Endothelial cell of umbilical vein (primary cell): ENCODE measurements at regions of chr12 and their contacts with region 1.

Region 1: DNA sequence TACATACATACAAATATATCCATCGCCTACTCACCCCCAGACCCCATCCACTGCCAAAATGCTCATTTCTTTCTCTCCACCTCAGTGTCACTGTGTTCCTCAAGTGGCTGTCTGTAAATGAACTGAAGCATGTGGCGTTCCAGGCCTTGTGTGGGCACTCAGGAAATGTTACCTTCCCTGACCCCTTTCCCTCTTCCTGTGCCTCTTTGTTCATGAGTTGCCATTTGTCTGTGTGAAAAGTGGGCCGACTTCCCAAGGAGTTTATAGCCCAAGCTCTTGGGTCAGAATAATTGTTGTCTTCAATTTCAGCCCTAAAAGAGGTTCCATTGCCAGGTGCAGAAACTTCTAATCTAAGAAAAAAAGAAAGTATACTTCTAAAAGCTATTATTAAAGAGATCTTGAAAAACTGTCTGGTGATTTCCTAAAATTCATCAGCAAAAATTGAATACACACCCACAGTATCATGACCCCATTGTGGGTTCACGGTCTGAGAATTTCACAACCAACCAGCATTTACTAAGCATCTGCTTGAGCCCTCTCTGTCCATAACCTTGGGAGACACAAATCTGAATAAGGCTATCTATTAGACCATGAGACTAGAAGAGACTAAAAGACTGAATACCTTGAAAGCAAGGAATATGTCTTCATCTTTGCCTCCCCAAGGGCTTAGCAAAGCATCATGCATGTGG is 201.4 kb upstream of the EEA1 start:
- DNase-seq: peak; percentile 88
- H3K4me3 ChIP-seq: no peak overlapping the region
- H3K27ac ChIP-seq: peak overlapping the region; percentile 25
- H3K4me1 ChIP-seq: peaks cover 25% of the 10 kb centered on the region
- H3K27me3 ChIP-seq: no peaks in the 10 kb centered on the region
- CTCF ChIP-seq: no peak
- POLR2A ChIP-seq: no peak

Region 2: DNA sequence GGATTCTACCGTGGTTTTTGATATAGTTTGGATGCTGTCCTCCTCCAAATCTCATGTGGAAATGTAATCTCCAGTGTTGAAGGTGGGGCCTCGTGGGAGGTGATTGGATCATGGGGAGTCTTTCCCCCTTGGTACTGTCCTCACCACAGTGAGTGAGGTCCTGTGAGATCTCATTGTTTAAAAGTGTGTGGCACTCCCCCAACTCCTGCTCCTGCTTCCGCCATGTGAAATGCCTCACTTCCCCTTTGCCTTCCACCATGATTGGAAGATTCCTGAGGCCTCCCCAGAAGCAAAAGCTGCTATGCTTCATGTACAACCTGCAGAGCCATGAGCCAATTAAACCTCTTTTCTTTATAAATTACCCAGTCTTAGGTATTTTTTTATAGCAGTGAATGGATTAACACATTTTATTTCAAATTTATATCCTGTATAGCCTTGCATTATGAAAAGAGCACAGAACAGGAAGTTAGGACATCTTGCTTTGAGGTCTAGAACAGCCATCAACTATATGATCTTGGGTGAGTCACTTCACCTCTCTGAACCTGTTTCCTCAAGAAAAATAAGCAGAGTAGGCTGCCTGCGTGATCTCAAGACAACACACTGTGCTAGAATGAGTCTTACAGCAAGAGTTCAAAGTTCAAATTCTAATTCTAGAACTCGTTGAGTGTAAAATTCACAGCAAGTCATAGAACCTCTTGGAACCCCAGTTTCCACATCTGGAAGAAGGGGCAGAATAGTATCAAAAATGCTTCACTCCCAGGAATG is 40.5 kb before region 1 on chr12:
- CTCF ChIA-PET with region 1: no interaction called
- POLR2A ChIA-PET with region 1: no interaction called
- dilution Hi-C with region 1: no loop called
- intact Hi-C with region 1: loop called (anchors 1 kb)
- DNase-seq: peak; percentile 92
- H3K4me3 ChIP-seq: no peak overlapping the region
- H3K27ac ChIP-seq: peak overlapping the region; percentile 83
- H3K4me1 ChIP-seq: peaks cover 41% of the 10 kb centered on the region
- H3K27me3 ChIP-seq: no peaks in the 10 kb centered on the region
- CTCF ChIP-seq: no peak
- POLR2A ChIP-seq: no peak